IMR-90 (cell line): ENCODE measurements at regions of chr7 and their contacts with region 1.

Region 1: GRCh38 chr7:38169847-38170246 is 8.2 kb upstream of the STARD3NL start:
- DNase-seq: peak; percentile 77
- ATAC-seq: peak; percentile 84
- H3K4me3 ChIP-seq: no peak overlapping the region
- H3K27ac ChIP-seq: peak overlapping the region; percentile 21; the same call in 1 of the 2 replicates
- H3K4me1 ChIP-seq: peaks cover 4% of the 10 kb centered on the region; the same call in 1 of the 2 replicates
- H3K27me3 ChIP-seq: no peaks in the 10 kb centered on the region
- CTCF ChIP-seq: no peak
- POLR2A ChIP-seq: no peak
- RAD21 ChIP-seq: no peak

Region 2: DNA sequence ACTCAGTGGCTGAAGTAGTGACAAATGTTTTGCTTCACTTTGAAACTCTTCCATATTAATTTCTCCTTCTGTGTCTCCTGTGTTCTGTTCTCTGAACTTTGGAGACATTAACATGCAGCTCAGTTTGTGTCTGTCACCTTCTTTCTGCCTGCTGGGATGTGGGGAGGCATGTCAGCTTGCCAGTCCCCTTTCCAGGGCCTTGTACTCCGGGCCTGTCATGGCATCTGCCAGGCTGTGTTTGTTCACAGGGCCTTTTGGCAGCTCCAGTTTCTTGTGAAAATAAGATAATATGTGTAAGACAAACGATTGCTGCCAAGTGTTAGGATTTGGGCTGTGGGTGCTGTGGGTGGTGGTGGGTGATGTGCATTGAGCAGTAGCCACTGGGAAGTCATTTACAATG is 645.0 kb before region 1 on chr7:
- CTCF ChIA-PET with region 1: no interaction called
- POLR2A ChIA-PET with region 1: no interaction called
- dilution Hi-C with region 1: no loop called
- in situ Hi-C with region 1: no loop called
- intact Hi-C with region 1: no loop called
- DNase-seq: no peak
- ATAC-seq: no peak
- H3K4me3 ChIP-seq: no peak overlapping the region
- H3K27ac ChIP-seq: no peak overlapping the region
- H3K4me1 ChIP-seq: no peaks in the 10 kb centered on the region
- H3K27me3 ChIP-seq: no peaks in the 10 kb centered on the region
- CTCF ChIP-seq: no peak
- POLR2A ChIP-seq: no peak
- RAD21 ChIP-seq: no peak

Region 3: GRCh38 chr7:38127216-38128207 is 42.3 kb before region 1 on chr7:
- CTCF ChIA-PET with region 1: no interaction called
- POLR2A ChIA-PET with region 1: no interaction called
- dilution Hi-C with region 1: no loop called
- in situ Hi-C with region 1: no loop called
- intact Hi-C with region 1: loop called (anchors 5 kb)
- DNase-seq: no peak
- ATAC-seq: no peak
- H3K4me3 ChIP-seq: no peak overlapping the region
- H3K27ac ChIP-seq: no peak overlapping the region
- H3K4me1 ChIP-seq: no peaks in the 10 kb centered on the region
- H3K27me3 ChIP-seq: no peaks in the 10 kb centered on the region
- CTCF ChIP-seq: no peak
- POLR2A ChIP-seq: no peak
- RAD21 ChIP-seq: no peak

Region 4: GRCh38 chr7:38153515-38153914 is 16.3 kb before region 1 on chr7:
- CTCF ChIA-PET with region 1: interaction called, 4 read pairs
- POLR2A ChIA-PET with region 1: no interaction called
- dilution Hi-C with region 1: no loop called
- in situ Hi-C with region 1: no loop called
- intact Hi-C with region 1: loop called (anchors 2 kb)
- DNase-seq: no peak
- ATAC-seq: no peak
- H3K4me3 ChIP-seq: no peak overlapping the region
- H3K27ac ChIP-seq: no peak overlapping the region
- H3K4me1 ChIP-seq: no peaks in the 10 kb centered on the region
- H3K27me3 ChIP-seq: no peaks in the 10 kb centered on the region
- CTCF ChIP-seq: no peak
- POLR2A ChIP-seq: no peak
- RAD21 ChIP-seq: no peak

Region 5: DNA sequence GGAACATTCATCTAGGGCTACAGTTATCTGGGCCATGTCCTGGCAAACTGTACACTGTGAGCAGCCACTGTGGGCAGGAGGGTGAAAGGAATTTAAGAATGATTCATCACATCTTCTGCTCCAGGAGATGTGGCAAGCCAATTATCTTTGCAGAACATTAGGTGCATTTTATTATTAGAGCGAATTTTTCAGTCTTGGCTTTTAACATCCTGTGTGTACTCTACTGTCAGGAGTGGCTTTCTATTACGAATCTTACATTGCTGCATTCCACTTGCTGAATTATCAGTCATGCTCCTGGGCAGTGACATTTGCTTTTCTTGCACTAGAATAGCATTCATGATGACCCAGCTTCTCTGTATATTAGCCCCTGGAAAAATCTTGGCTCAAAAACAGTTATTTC is 212.8 kb after region 1 on chr7:
- CTCF ChIA-PET with region 1: no interaction called
- POLR2A ChIA-PET with region 1: no interaction called
- dilution Hi-C with region 1: no loop called
- in situ Hi-C with region 1: no loop called
- intact Hi-C with region 1: no loop called
- DNase-seq: peak; percentile 10
- ATAC-seq: peak; percentile 56
- H3K4me3 ChIP-seq: no peak overlapping the region
- H3K27ac ChIP-seq: no peak overlapping the region
- H3K4me1 ChIP-seq: no peaks in the 10 kb centered on the region
- H3K27me3 ChIP-seq: no peaks in the 10 kb centered on the region
- CTCF ChIP-seq: no peak
- POLR2A ChIP-seq: no peak
- RAD21 ChIP-seq: no peak